MCF 10A (cell line): ENCODE measurements at regions of chr17 and their contacts with region 1.

Region 1: GRCh38 chr17:58587702-58588254 is 73.3 kb upstream of the MTMR4 start:
- DNase-seq: peak; percentile 65
- H3K4me3 Mint-ChIP-seq: no peak overlapping the region
- H3K27ac Mint-ChIP-seq: no peak overlapping the region
- H3K4me1 Mint-ChIP-seq: no peaks in the 10 kb centered on the region
- H3K27me3 Mint-ChIP-seq: peaks cover 13% of the 10 kb centered on the region
- CTCF ChIP-seq: peak; percentile 89

Region 2: DNA sequence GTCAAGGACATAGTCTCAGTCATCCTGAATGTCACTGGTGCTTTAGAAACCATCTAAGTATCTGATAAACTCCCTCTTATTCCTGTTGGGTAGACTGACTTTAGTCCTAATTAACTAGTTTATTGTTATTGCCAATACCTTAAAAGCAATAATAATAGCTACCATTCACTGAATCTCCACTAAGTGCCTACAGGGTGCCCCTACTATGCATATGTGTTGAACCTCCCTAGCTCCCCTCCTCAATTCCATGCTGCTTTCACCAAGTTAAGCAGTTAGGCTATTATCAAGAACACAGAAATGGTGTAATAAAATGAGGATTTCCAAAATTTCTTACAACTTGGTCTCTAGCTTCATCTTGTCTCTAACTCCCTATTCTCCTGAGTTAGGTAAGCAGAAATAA is 14.2 kb after region 1 on chr17:
- CTCF ChIA-PET with region 1: interaction called, 15 read pairs
- POLR2A ChIA-PET with region 1: no interaction called
- intact Hi-C with region 1: no loop called
- DNase-seq: no peak
- H3K4me3 Mint-ChIP-seq: no peak overlapping the region
- H3K27ac Mint-ChIP-seq: no peak overlapping the region
- H3K4me1 Mint-ChIP-seq: no peaks in the 10 kb centered on the region
- H3K27me3 Mint-ChIP-seq: no peaks in the 10 kb centered on the region
- CTCF ChIP-seq: no peak

Region 3: GRCh38 chr17:58728786-58729185 is 141.0 kb after region 1 on chr17:
- CTCF ChIA-PET with region 1: no interaction called
- POLR2A ChIA-PET with region 1: no interaction called
- intact Hi-C with region 1: no loop called
- DNase-seq: no peak
- H3K4me3 Mint-ChIP-seq: no peak overlapping the region
- H3K27ac Mint-ChIP-seq: no peak overlapping the region
- H3K4me1 Mint-ChIP-seq: no peaks in the 10 kb centered on the region
- H3K27me3 Mint-ChIP-seq: no peaks in the 10 kb centered on the region
- CTCF ChIP-seq: no peak

Region 4: DNA sequence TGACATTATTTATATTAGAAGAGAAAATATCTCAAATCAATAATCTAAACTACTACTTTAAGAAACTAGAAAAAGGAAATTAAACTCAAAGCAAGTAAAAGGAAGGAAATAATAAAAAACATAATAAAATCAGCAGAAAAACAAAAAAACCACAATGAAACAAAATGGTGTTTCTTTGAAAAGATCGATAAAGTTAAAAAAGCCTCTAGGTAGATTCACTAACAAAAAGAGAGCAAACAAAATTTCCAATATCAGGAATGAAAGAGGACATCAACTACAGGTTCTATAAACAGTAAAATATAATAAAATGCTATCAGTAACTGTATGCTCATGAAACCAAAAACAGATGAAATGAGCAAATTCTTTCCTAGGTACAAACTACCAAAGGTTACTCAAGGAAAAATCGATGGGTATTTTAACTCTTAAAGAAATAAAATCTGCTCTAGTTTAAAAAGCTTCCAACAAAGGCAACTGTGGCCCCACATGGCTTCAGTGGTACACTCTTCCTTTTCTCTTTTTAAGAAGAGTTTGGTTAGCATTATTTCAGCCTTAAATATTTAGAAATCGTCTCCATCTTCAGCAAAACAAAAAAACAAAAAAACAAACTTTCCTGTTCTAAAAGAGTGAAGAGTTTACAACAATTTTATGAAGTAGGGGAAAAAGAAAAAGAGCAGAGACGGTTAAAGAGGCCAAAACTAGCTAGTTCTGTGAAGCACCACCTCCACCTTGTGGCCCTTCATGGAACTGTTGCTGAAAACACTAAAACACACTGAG is 416.7 kb after region 1 on chr17:
- CTCF ChIA-PET with region 1: interaction called, 15 read pairs
- POLR2A ChIA-PET with region 1: interaction called, 3 read pairs
- intact Hi-C with region 1: loop called (anchors 1 kb)
- DNase-seq: peak; percentile 75
- H3K4me3 Mint-ChIP-seq: no peak overlapping the region
- H3K27ac Mint-ChIP-seq: peak overlapping the region; percentile 19
- H3K4me1 Mint-ChIP-seq: no peaks in the 10 kb centered on the region
- H3K27me3 Mint-ChIP-seq: no peaks in the 10 kb centered on the region
- CTCF ChIP-seq: peak; percentile 95